B cell (primary cell): ENCODE measurements at regions of chr3 and their contacts with region 1.

Region 1: GRCh38 chr3:146640955-146641867 is 36.1 kb upstream of the PLSCR5 start:
- DNase-seq: peak; percentile 16
- ATAC-seq: no peak
- H3K4me3 ChIP-seq: no peak overlapping the region
- H3K4me3 Mint-ChIP-seq: no peak overlapping the region
- H3K27ac ChIP-seq: no peak overlapping the region
- H3K27ac Mint-ChIP-seq: no peak overlapping the region
- H3K4me1 ChIP-seq: no peaks in the 10 kb centered on the region
- H3K4me1 Mint-ChIP-seq: no peaks in the 10 kb centered on the region
- H3K27me3 ChIP-seq: no peaks in the 10 kb centered on the region
- H3K27me3 Mint-ChIP-seq: no peaks in the 10 kb centered on the region
- CTCF ChIP-seq: peak; percentile 66

Region 2: GRCh38 chr3:146065573-146066006 is 575.6 kb before region 1 on chr3:
- CTCF ChIA-PET with region 1: no interaction called
- POLR2A ChIA-PET with region 1: no interaction called
- intact Hi-C with region 1: loop called (anchors 5 kb)
- DNase-seq: peak; percentile 18
- ATAC-seq: no peak
- H3K4me3 ChIP-seq: no peak overlapping the region
- H3K4me3 Mint-ChIP-seq: no peak overlapping the region
- H3K27ac ChIP-seq: no peak overlapping the region
- H3K27ac Mint-ChIP-seq: no peak overlapping the region
- H3K4me1 ChIP-seq: no peaks in the 10 kb centered on the region
- H3K4me1 Mint-ChIP-seq: no peaks in the 10 kb centered on the region
- H3K27me3 ChIP-seq: no peaks in the 10 kb centered on the region
- H3K27me3 Mint-ChIP-seq: no peaks in the 10 kb centered on the region
- CTCF ChIP-seq: peak; percentile 87

Region 3: GRCh38 chr3:146589899-146590508 is 51.2 kb before region 1 on chr3:
- CTCF ChIA-PET with region 1: interaction called, 5 read pairs
- POLR2A ChIA-PET with region 1: no interaction called
- intact Hi-C with region 1: loop called (anchors 2 kb)
- DNase-seq: peak; percentile 10
- ATAC-seq: no peak
- H3K4me3 ChIP-seq: no peak overlapping the region
- H3K4me3 Mint-ChIP-seq: no peak overlapping the region
- H3K27ac ChIP-seq: no peak overlapping the region
- H3K27ac Mint-ChIP-seq: no peak overlapping the region
- H3K4me1 ChIP-seq: no peaks in the 10 kb centered on the region
- H3K4me1 Mint-ChIP-seq: no peaks in the 10 kb centered on the region
- H3K27me3 ChIP-seq: peaks cover 0 to 2% (median 0%) of the 10 kb centered on the region in 4 experiments
- H3K27me3 Mint-ChIP-seq: peaks cover 8% of the 10 kb centered on the region
- CTCF ChIP-seq: peak; percentile 60